Activated CD4-positive, alpha-beta memory T cell treated with anti-CD3 and anti-CD28 coated beads for 36 hours (primary cell): ENCODE measurements at regions of chr12 and their contacts with region 1.

Region 1: GRCh38 chr12:93766796-93767523 is 89.8 kb downstream of the CRADD start:
- DNase-seq: peak; percentile 48
- H3K4me3 Mint-ChIP-seq: no peak overlapping the region
- H3K27ac Mint-ChIP-seq: peak overlapping the region; percentile 44
- H3K4me1 Mint-ChIP-seq: peaks cover 30% of the 10 kb centered on the region
- H3K27me3 Mint-ChIP-seq: no peaks in the 10 kb centered on the region

Region 2: GRCh38 chr12:93979189-93979588 is 212.2 kb after region 1 on chr12:
- CTCF ChIA-PET with region 1: interaction called, 32 read pairs
- POLR2A ChIA-PET with region 1: no interaction called
- intact Hi-C with region 1: loop called (anchors 1 kb)
- DNase-seq: peak; percentile 26
- H3K4me3 Mint-ChIP-seq: no peak overlapping the region
- H3K27ac Mint-ChIP-seq: no peak overlapping the region
- H3K4me1 Mint-ChIP-seq: peaks cover 6% of the 10 kb centered on the region
- H3K27me3 Mint-ChIP-seq: no peaks in the 10 kb centered on the region

Region 3: DNA sequence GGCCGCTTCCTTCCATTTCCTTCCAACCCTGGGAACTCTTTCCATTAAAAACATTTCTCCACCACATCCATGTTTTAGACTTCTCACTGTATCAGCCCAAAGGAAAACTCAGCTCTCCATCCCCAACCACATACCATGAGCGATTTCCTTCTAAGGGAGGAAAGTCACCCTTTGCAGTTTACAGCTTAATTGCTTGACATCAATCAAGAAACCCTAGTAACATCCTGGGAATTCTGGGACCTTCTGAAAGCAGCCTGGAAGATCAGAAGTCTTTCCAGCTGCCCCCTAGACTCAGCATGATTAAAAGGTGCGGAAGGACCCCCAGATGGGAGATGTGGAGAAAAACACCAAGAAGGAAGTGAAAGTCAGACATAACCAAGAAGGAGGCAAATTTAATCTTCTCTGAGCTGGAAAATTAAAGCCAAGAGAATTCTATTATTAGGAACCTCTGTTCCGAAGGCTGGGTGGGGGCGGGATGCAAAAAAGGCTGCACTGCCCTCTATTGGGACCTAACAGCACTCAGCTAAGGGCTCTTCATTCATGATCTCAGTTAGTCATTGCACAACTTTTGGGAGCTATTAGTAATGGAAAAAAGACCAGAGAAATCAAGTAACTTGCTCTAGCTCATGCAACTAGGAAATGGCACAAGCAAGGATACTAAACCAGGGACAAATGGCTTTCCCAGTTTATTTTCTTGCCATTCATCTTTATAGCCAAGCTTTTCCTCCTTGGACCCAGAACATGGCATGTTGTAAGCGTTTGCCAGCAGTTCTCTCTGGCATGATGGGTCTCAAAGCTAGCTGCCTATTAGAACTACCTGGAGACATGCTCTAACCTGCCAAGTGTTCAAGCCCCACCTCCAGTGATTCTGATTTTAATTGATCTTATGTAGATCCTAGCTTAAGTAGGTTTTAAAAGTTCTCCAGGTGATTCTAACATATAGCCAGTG is 308.3 kb after region 1 on chr12:
- CTCF ChIA-PET with region 1: interaction called, 14 read pairs
- POLR2A ChIA-PET with region 1: no interaction called
- intact Hi-C with region 1: no loop called
- DNase-seq: peak; percentile 24
- H3K4me3 Mint-ChIP-seq: no peak overlapping the region
- H3K27ac Mint-ChIP-seq: no peak overlapping the region
- H3K4me1 Mint-ChIP-seq: peaks cover 16% of the 10 kb centered on the region
- H3K27me3 Mint-ChIP-seq: peaks cover 8% of the 10 kb centered on the region